ENCODE measurements at regions of chr12 and their contacts with region 1.

Region 1: DNA sequence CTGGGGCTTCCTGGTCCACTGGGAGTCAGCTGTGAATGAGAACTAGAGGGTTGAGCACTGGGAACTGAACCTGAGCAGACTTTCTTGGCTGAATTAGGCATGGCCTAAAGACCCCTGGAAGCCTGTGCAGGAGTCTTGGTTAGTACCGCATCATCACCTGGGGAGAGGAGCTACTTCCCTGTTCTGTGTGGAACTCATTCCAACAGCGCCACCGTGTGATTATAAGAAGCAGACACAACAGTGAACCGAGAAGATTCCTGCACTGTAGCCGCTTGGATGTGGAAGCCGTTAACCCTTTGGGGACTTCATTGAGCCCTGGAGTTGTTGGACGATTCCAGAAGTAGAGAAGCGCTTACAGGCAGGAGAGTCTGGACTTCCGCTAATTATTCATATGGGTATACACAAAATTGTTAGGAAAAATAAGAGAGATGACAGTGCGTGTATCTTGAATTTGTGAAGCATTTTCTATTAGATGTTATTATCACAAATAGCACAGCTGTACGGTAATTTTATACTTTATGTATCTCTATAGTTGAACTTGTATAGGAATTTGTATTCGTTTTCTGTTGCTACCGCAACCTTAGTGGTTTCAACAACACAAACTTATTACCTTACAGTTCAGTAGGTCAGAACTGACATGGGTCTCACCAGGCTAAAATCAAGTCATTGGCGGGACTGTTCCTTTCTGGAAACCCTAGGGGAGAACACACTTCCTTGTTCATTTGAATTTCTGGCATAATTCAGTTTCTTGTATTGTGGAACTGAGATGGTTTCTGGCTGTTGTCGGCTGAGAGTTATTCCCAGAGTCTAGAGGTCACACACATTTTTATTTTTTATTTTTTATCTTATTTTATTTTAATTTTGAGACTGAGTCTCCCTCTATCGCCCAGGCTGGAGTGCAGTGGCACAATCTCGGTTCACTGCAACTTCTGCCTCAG is 100.7 kb downstream of the C2CD5 start:
- DNase-seq: peak; percentile 67 to 72 (median 68)
- H3K4me3 ChIP-seq: no peak overlapping the region
- H3K4me3 Mint-ChIP-seq: no peak overlapping the region
- H3K27ac ChIP-seq: no peak overlapping the region
- H3K27ac Mint-ChIP-seq: peak overlapping the region in 2 of 7 donors; percentile 14 to 32
- H3K4me1 ChIP-seq: peaks cover 6% of the 10 kb centered on the region
- H3K4me1 Mint-ChIP-seq: peaks cover 8 to 19% (median 13%) of the 10 kb centered on the region in 4 donors
- H3K27me3 ChIP-seq: no peaks in the 10 kb centered on the region
- H3K27me3 Mint-ChIP-seq: no peaks in the 10 kb centered on the region

Region 2: DNA sequence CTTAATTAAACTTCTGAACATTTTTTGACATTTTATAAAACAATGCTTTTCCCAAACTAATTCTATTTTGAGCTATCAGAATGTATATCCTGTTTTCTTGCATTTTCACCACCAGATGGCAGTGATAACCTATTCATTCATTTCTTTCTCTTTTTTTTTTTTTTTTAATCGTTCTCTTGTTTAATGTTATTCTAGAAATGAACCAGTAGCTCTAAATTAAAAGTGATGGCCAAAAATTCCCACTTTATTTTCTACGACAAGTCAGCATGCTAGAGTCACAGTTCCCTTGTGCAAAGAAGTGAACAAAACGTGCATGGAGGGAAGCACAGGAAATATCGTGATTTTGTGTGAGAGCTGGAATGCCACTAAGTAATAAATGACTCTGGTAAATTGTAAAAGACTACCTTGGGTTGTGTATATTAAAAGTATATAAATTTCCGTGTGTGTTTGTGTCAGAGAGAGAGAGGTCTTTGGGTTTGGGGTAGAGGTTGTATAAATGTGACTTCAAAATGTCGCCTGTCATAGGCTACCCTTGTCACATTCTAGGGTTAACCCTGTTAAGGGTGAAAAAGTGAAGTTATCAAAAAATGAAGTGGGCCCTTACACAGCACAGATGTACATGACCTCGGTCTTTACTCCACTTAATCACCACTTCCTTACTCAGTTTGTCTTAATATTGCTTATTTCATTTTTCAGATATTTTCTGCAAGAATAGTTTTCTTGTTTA is 745.6 kb before region 1 on chr12:
- CTCF ChIA-PET with region 1: interaction called, 6 read pairs
- POLR2A ChIA-PET with region 1: no interaction called
- intact Hi-C with region 1: loop called (anchors 1 kb)
- DNase-seq: peak in 4 of 5 donors; percentile 43 to 46 (median 44)
- H3K4me3 ChIP-seq: no peak overlapping the region
- H3K4me3 Mint-ChIP-seq: peak overlapping the region in 6 of 8 donors; percentile 19 to 68 (median 27)
- H3K27ac ChIP-seq: no peak overlapping the region
- H3K27ac Mint-ChIP-seq: no peak overlapping the region
- H3K4me1 ChIP-seq: peaks cover 11% of the 10 kb centered on the region
- H3K4me1 Mint-ChIP-seq: peaks cover 0 to 16% (median 10%) of the 10 kb centered on the region in 4 donors
- H3K27me3 ChIP-seq: no peaks in the 10 kb centered on the region
- H3K27me3 Mint-ChIP-seq: no peaks in the 10 kb centered on the region

Region 3: DNA sequence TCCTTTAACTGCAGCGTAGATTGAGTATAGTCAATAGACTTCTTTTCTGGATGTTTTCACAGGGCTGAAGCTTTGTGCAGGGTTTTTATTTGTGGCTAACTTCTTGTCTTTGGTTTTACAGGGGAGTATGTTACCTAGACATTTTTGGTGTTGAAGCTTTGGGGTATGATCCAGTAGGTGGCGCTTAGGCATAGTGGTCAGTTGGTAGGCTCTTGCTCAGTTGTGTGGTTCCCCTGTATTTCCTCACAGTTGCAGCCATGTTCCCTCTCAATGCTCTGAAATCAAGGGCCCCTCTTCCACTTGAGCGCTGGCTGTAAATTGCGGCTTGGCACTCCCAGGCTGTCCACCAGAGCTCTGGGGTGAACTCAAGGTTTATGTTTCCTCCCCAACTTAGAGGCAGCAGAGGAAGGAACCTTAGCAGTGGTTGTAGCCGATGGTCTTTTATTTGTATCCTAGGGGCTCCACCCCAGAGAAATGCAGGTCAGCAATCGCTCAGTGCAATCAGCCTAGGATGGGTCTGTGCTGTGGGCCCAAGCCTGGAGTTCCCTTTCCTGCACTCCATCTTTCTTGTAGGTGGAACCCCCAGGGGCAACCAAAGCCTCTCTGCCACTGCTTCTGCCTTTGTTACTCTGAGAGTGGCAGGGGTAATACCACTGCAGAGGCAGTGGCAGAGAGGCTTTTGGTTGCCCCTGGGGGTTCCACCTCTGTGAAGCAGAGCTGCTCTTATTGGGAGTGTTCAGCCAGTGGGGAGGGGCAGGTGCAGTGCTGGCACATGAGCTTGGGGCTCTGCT is 342.5 kb before region 1 on chr12:
- CTCF ChIA-PET with region 1: interaction called, 35 read pairs
- POLR2A ChIA-PET with region 1: no interaction called
- intact Hi-C with region 1: loop called (anchors 1 kb)
- DNase-seq: peak in 4 of 5 donors; percentile 45 to 55 (median 47)
- H3K4me3 ChIP-seq: no peak overlapping the region
- H3K4me3 Mint-ChIP-seq: peak overlapping the region in 1 of 8 donors; percentile 32
- H3K27ac ChIP-seq: no peak overlapping the region
- H3K27ac Mint-ChIP-seq: peak overlapping the region in 1 of 7 donors; percentile 13
- H3K4me1 ChIP-seq: peaks cover 14% of the 10 kb centered on the region
- H3K4me1 Mint-ChIP-seq: peaks cover 7 to 17% (median 13%) of the 10 kb centered on the region in 4 donors
- H3K27me3 ChIP-seq: no peaks in the 10 kb centered on the region
- H3K27me3 Mint-ChIP-seq: no peaks in the 10 kb centered on the region

Region 4: DNA sequence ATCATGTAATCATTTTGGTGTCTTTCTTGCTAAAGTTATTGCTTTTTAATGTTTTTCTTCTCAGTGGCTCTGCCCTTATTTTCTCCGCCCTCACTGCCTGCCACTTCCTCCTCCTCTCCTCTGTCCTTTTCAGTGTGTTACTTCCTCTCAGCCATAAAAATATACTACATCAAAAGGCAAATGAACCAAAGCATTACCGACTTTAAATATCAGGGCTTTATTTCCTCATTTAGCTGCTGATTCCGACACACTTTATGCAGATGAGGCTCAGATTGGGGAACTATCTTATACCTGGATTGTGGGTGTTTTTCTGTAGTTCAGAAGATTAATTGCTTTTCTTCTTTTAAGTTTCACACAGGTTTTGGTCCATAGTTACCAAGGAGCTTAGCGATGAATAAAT is 279.5 kb before region 1 on chr12:
- CTCF ChIA-PET with region 1: no interaction called
- POLR2A ChIA-PET with region 1: no interaction called
- intact Hi-C with region 1: loop called (anchors 5 kb)
- DNase-seq: peak in 4 of 5 donors; percentile 28 to 57 (median 40)
- H3K4me3 ChIP-seq: no peak overlapping the region
- H3K4me3 Mint-ChIP-seq: peak overlapping the region; percentile 33 to 78 (median 56)
- H3K27ac ChIP-seq: peak overlapping the region; percentile 40
- H3K27ac Mint-ChIP-seq: peak overlapping the region; percentile 31 to 89 (median 72)
- H3K4me1 ChIP-seq: peaks cover 58% of the 10 kb centered on the region
- H3K4me1 Mint-ChIP-seq: peaks cover 40 to 57% (median 49%) of the 10 kb centered on the region in 4 donors
- H3K27me3 ChIP-seq: no peaks in the 10 kb centered on the region
- H3K27me3 Mint-ChIP-seq: no peaks in the 10 kb centered on the region

Region 5: GRCh38 chr12:22396253-22396652 is 47.4 kb before region 1 on chr12:
- CTCF ChIA-PET with region 1: interaction called, 4 read pairs
- POLR2A ChIA-PET with region 1: no interaction called
- intact Hi-C with region 1: loop called (anchors 2 kb)
- DNase-seq: peak; percentile 59 to 83 (median 67)
- H3K4me3 ChIP-seq: no peak overlapping the region
- H3K4me3 Mint-ChIP-seq: peak overlapping the region; percentile 36 to 83 (median 78)
- H3K27ac ChIP-seq: peak overlapping the region; percentile 61
- H3K27ac Mint-ChIP-seq: peak overlapping the region; percentile 83 to 96 (median 91)
- H3K4me1 ChIP-seq: peaks cover 60% of the 10 kb centered on the region
- H3K4me1 Mint-ChIP-seq: peaks cover 34 to 47% (median 42%) of the 10 kb centered on the region in 4 donors
- H3K27me3 ChIP-seq: no peaks in the 10 kb centered on the region
- H3K27me3 Mint-ChIP-seq: no peaks in the 10 kb centered on the region

Region 6: GRCh38 chr12:22459838-22460490 is 16.3 kb after region 1 on chr12:
- CTCF ChIA-PET with region 1: interaction called, 47 read pairs
- POLR2A ChIA-PET with region 1: interaction called, 3 read pairs
- intact Hi-C with region 1: no loop called
- DNase-seq: peak in 4 of 5 donors; percentile 41 to 46 (median 44)
- H3K4me3 ChIP-seq: no peak overlapping the region
- H3K4me3 Mint-ChIP-seq: no peak overlapping the region
- H3K27ac ChIP-seq: no peak overlapping the region
- H3K27ac Mint-ChIP-seq: peak overlapping the region in 2 of 7 donors; percentile 5 to 38
- H3K4me1 ChIP-seq: no peaks in the 10 kb centered on the region
- H3K4me1 Mint-ChIP-seq: peaks cover 0 to 4% (median 2%) of the 10 kb centered on the region in 4 donors
- H3K27me3 ChIP-seq: no peaks in the 10 kb centered on the region
- H3K27me3 Mint-ChIP-seq: no peaks in the 10 kb centered on the region

Measured in CD4-positive, alpha-beta memory T cell (primary cell).